ENCODE measurements at regions of chr15 and their contacts with region 1.

Region 1: DNA sequence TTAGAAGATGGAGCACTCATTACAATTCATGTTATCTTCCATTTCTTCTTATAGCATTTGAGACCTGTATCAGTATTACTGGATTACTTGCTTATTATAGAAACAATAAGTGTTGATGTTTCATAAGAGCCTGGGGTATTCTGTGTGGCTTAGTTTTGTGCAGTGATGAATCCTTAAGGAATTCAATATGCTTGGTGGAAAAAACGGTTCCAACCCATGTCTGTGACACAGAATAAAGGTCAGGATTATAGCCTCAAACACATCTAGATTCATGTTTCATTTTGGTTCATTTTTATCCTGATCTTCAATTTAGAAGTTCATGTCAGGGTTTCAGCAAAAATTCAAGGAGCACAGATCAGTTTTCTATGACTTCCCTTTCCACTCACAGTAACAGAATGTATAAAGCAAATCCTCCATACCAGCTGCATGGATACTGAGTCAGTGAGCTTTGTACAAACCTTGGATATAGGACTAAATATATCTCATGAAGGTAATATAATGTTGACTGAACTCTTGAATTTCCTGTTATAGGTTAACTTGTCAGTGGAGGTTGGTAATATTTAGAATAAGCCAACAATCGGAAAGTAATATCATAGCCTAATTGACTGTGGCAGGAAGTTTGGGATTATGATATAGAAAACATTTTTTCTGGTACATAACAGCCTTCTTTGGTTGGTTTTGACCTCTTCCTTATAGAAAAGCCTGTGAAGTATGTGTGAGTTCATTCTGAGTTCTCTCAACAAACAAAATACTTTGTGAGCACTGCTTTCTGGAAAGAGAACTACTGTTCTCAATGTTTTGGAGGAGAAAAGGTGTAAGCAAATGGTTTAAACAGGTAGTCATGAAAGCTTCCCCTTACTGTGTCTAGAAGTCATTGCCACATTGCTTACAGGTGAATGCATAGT is 218.2 kb upstream of the TPM1 start:
- DNase-seq: no peak
- H3K4me3 ChIP-seq: no peak overlapping the region
- CTCF ChIP-seq: no peak
- POLR2A ChIP-seq: no peak

Region 2: GRCh38 chr15:62769604-62770003 is 54.8 kb before region 1 on chr15:
- intact Hi-C with region 1: loop called (anchors 10 kb)
- DNase-seq: no peak
- H3K4me3 ChIP-seq: no peak overlapping the region
- CTCF ChIP-seq: no peak
- POLR2A ChIP-seq: no peak